Right ventricle myocardium inferior (tissue), 1 donor: ENCODE measurements at regions of chr15 and their contacts with region 1.

Region 1: GRCh38 chr15:82849556-82850512 is 40.4 kb downstream of the WHAMM start:
- DNase-seq: peak; percentile 88
- ATAC-seq: peak; percentile 90

Region 2: GRCh38 chr15:82919231-82919886 is 69.5 kb after region 1 on chr15:
- intact Hi-C with region 1: loop called (anchors 10 kb)
- DNase-seq: no peak
- ATAC-seq: peak; percentile 44

Region 3: DNA sequence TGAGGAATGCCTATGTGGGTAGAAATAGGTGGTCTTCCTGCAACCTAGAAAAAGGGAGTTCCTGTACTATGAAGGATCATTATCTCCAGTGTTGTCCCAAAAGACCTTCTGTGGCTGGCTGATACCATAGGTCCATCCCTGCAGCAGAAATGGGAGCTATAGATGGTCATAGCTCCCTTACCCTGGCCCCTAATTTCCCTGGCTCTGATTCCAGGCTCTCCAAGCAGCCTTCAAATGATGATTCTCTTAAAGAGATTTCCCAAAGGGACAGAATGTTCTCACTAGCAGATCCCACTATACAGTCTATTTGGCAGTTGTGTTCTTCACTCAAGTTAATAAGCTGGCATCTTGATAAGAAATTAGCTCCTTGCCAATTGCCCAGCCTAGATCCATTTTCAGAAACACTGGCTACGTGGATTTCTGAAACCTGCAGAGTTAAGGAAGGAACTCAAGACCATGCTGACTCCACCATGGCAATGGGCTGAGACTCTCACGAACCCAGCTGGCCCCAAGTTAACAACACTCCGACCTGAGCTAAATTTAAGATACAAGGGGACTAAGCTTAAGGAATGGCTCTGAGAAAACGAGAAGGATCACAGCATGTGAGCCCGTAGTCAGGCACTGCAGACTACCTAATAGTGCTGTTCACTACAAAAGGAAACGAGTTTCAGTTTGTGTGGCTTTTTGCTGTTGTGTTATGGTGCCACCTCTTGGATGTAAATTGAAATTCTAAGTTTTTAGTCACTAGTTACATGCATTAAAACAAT is 150.3 kb after region 1 on chr15:
- intact Hi-C with region 1: loop called (anchors 2 kb)
- DNase-seq: no peak
- ATAC-seq: peak; percentile 76